ENCODE measurements at regions of chr11 and their contacts with region 1.

Region 1: GRCh38 chr11:83033972-83034672 is 37.6 kb downstream of the RAB30 start:
- DNase-seq: no peak
- H3K4me3 ChIP-seq: no peak overlapping the region
- H3K27ac ChIP-seq: no peak overlapping the region
- H3K4me1 ChIP-seq: peaks cover 33% of the 10 kb centered on the region
- CTCF ChIP-seq: no peak

Region 2: DNA sequence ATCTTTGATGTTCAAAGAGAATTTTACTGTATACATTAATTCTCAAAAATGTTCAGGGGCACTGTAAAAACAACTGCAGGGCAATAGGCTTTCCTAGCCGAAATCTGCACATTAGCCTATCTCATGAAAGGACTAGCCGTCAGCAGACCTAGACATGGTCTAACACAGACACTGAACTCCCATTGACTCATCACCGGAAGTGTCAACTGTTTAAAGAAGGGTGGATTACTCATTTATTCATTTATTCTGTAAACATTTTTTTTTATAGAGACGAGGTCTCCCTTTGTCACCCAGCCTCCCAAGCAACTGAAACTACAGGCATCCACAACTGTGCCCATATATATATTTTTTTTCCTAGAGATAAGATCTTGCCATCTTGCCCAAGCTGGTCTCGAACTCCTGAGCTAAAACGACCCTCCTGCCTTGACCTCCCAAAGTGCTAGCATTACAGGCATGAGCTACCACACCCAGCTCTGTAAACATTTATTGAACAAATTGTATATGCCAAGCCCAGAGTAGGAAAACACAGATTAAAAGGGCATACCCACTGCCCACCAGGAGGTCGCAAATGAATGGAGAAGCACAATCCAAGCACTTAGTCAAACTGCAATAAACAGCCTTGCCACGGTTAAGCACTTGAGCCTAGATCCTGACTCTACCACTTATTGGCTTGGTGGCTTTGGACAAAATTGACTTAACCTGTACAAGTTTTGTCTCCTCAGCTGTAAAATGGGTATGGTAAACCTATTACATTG is 11.0 kb after region 1 on chr11:
- CTCF ChIA-PET with region 1: no interaction called
- POLR2A ChIA-PET with region 1: interaction called, 17 read pairs
- intact Hi-C with region 1: no loop called
- DNase-seq: peak; percentile 53
- H3K4me3 ChIP-seq: peak overlapping the region; percentile 9
- H3K27ac ChIP-seq: no peak overlapping the region
- H3K4me1 ChIP-seq: peaks cover 64% of the 10 kb centered on the region
- CTCF ChIP-seq: no peak

Region 3: DNA sequence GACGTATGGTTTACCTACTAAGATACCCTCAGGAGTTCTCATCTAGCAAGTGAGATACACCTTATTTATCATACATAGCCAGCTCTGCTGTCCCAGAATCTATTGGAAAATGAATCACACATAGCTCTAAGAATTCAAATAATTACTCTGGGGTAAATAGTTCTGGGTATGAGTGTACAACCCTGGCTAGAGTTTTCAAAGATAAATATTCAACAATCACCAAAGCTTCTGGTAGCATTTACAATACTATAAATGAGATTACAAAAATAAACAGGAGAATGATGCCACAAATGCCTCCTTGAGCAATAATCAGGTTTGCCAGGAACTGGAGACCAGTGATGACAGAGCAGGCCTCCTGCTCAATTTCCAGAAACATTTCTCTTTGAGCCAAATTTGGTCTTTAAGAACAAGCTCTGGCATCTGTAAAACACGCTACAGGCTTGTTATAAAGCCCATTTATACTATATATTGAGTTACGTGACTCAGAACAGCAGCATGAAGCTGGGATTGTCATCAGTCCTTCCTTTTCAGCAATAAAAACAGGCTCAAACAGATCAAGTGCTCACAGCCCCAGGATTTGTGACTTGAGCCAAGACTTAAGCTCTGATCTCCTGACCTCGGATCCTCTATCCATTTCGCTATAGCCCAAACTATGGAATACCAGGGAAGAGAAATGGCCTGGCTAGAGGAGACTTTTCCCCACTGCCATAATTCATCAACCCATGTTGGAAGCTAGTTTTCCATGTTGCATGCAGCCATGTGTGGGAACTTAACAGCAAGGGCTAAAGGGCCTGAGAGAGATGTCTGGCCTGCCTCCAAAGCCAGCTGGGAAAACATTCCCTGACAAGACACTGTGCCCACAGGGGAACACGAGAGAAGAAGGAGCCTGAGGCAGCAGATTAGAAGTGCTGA is 17.9 kb after region 1 on chr11:
- CTCF ChIA-PET with region 1: no interaction called
- POLR2A ChIA-PET with region 1: interaction called, 17 read pairs
- intact Hi-C with region 1: no loop called
- DNase-seq: no peak
- H3K4me3 ChIP-seq: no peak overlapping the region
- H3K27ac ChIP-seq: no peak overlapping the region
- H3K4me1 ChIP-seq: peaks cover 61% of the 10 kb centered on the region
- CTCF ChIP-seq: no peak

Measured in OCI-LY7 (cell line).